WTC11 (cell line): ENCODE measurements at regions of chr12 and their contacts with region 1.

Region 1: DNA sequence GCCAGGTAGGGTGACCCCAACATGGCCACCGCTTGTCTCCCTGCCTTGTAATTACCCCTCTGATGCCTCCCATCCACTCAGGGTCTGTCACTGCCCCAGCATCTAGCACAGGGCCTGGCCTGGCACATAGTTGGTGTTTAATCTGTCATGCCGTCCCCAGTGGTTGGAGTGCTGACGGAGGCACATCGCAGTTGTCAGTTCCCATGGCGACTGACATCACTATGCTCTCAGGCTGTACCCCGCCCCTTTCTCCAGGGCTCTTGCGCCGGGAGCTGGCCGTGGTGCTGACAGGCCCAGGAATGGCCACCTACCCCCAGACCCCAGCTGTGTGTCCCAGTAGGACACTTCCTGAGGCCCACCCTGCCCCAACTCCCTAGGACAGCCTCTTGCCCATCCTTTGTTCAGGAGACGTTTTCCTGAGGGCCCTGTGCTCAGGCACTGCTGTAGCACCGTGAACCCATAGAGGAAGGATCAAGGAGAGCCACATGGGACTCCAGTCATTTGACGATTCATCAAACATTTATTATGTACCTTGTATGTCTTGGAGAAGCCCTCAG is 23.0 kb downstream of the FAM222A start:
- DNase-seq: peak; percentile 87
- ATAC-seq: peak; percentile 77
- H3K4me3 Mint-ChIP-seq: no peak overlapping the region
- H3K27ac Mint-ChIP-seq: no peak overlapping the region
- H3K4me1 Mint-ChIP-seq: peaks cover 34% of the 10 kb centered on the region
- H3K27me3 Mint-ChIP-seq: no peaks in the 10 kb centered on the region
- CTCF ChIP-seq: no peak

Region 2: GRCh38 chr12:109663795-109664194 is 72.8 kb before region 1 on chr12:
- CTCF ChIA-PET with region 1: no interaction called
- POLR2A ChIA-PET with region 1: no interaction called
- DNase-seq: no peak
- ATAC-seq: no peak
- H3K4me3 Mint-ChIP-seq: no peak overlapping the region
- H3K27ac Mint-ChIP-seq: no peak overlapping the region
- H3K4me1 Mint-ChIP-seq: no peaks in the 10 kb centered on the region
- H3K27me3 Mint-ChIP-seq: peaks cover 3% of the 10 kb centered on the region; the same call in 1 of the 2 replicates
- CTCF ChIP-seq: no peak

Region 3: GRCh38 chr12:109713187-109713984 is 23.2 kb before region 1 on chr12 and contains the start of gene FAM222A:
- CTCF ChIA-PET with region 1: interaction called, 50 read pairs
- POLR2A ChIA-PET with region 1: interaction called, 3 read pairs
- DNase-seq: peak; percentile 96
- ATAC-seq: peak; percentile 74
- H3K4me3 Mint-ChIP-seq: peak within 1 kb of the TSS; percentile 60
- H3K27ac Mint-ChIP-seq: no peak within 1 kb of the TSS
- H3K4me1 Mint-ChIP-seq: peaks cover 32% of the 10 kb centered on the region
- H3K27me3 Mint-ChIP-seq: peaks cover 51% of the 10 kb centered on the region
- CTCF ChIP-seq: no peak
- total RNA-seq, gene FAM222A: 1.3 to 1.6 TPM (median 1.6 TPM) in 3 replicates

Region 4: GRCh38 chr12:109719236-109720022 is 17.2 kb before region 1 on chr12:
- CTCF ChIA-PET with region 1: interaction called, 50 read pairs
- POLR2A ChIA-PET with region 1: interaction called, 3 read pairs
- DNase-seq: peak; percentile 45
- ATAC-seq: peak; percentile 57
- H3K4me3 Mint-ChIP-seq: peak overlapping the region; percentile 50
- H3K27ac Mint-ChIP-seq: peak overlapping the region; percentile 77; the same call in 1 of the 2 replicates
- H3K4me1 Mint-ChIP-seq: peaks cover 25% of the 10 kb centered on the region
- H3K27me3 Mint-ChIP-seq: peaks cover 41% of the 10 kb centered on the region
- CTCF ChIP-seq: no peak

Region 5: DNA sequence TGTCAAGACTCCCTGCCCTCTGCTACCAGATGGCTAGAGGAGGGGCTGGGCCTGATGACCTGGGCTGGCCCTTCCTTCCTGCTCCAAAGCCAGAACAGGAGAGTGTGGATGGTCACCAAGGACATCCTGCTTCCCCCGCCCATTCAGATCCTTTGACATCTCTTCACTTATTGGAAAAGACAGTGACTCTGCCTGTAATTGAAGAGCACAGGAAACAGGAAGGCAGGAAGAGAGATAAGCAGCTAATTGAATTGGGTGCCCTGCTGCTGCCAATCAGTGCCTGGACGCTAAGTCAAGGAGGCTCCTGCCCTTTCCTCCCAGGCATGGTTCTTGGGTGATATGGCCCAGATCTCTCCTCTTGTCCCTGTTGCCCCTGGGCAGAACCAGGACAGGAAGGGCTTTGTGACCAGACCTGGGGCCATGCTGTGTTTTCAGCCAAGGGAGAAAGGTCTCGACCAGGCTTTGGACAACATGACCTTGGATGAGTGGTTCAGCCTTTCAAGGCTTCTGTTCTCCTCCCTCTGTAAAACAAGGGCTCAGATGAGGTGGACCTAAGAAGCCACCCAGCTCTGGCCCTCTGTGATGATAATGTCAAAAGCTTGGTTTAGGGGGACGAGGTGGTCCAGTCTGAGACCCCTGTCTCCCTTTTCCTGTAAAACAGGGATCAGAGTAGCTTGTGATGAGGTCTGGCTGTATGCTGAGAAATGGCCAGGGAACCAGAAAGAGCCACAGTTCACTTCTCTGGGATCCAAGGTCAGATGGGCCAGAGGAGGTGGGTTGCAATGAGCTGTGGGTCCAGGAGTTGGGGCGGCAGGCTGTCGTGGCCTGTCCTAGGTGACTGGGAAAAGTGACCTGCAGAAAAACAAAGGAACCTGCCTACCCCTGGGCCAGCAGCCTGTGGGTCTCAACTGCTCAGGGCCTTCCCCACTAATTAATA is 15.8 kb after region 1 on chr12:
- CTCF ChIA-PET with region 1: interaction called, 15 read pairs
- POLR2A ChIA-PET with region 1: no interaction called
- DNase-seq: peak; percentile 3
- ATAC-seq: no peak
- H3K4me3 Mint-ChIP-seq: no peak overlapping the region
- H3K27ac Mint-ChIP-seq: no peak overlapping the region
- H3K4me1 Mint-ChIP-seq: no peaks in the 10 kb centered on the region
- H3K27me3 Mint-ChIP-seq: no peaks in the 10 kb centered on the region
- CTCF ChIP-seq: no peak

Region 6: GRCh38 chr12:109763201-109763841 is 26.7 kb after region 1 on chr12:
- CTCF ChIA-PET with region 1: interaction called, 15 read pairs
- POLR2A ChIA-PET with region 1: interaction called, 3 read pairs
- DNase-seq: no peak
- ATAC-seq: no peak
- H3K4me3 Mint-ChIP-seq: no peak overlapping the region
- H3K27ac Mint-ChIP-seq: no peak overlapping the region
- H3K4me1 Mint-ChIP-seq: peaks cover 10% of the 10 kb centered on the region
- H3K27me3 Mint-ChIP-seq: no peaks in the 10 kb centered on the region
- CTCF ChIP-seq: no peak

Region 7: DNA sequence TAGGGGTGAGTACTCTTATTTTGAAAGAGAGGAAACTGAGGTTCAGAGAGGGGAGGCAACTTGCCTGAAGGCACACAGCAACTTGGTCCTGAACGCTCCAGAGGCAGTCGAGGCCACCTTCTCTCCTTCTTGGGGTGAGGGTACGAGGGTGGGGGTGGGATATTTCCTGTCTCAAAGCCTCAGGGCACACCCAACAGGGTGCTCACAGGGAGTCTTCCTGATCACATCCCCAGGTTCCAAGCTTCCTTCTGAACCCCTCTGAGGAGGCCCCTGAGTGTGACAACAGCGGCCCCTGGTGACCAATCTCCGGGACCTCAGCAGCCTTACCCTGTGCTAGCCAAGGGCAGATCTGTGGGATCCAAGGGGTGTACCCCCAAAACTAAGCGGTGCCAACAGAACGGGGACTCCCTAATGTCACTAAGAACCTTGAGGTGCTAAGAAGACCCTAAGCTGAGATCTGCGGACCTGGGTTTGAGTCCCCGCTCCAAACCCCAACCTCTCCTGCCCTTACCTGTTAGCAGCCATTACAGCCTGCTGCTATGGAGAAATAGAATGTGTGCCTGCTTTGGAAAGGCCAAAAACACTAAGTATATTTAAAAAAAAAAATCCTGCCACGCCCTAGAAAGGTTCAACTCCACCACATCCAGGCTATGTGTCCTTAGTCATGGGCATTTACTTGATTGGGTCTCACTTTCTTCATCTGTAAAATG is 38.7 kb after region 1 on chr12:
- CTCF ChIA-PET with region 1: interaction called, 10 read pairs
- POLR2A ChIA-PET with region 1: no interaction called
- DNase-seq: peak; percentile 87
- ATAC-seq: peak; percentile 86
- H3K4me3 Mint-ChIP-seq: no peak overlapping the region
- H3K27ac Mint-ChIP-seq: no peak overlapping the region
- H3K4me1 Mint-ChIP-seq: peaks cover 20% of the 10 kb centered on the region
- H3K27me3 Mint-ChIP-seq: no peaks in the 10 kb centered on the region
- CTCF ChIP-seq: peak; percentile 67